ENCODE measurements at regions of chr1 and their contacts with region 1.

Region 1: DNA sequence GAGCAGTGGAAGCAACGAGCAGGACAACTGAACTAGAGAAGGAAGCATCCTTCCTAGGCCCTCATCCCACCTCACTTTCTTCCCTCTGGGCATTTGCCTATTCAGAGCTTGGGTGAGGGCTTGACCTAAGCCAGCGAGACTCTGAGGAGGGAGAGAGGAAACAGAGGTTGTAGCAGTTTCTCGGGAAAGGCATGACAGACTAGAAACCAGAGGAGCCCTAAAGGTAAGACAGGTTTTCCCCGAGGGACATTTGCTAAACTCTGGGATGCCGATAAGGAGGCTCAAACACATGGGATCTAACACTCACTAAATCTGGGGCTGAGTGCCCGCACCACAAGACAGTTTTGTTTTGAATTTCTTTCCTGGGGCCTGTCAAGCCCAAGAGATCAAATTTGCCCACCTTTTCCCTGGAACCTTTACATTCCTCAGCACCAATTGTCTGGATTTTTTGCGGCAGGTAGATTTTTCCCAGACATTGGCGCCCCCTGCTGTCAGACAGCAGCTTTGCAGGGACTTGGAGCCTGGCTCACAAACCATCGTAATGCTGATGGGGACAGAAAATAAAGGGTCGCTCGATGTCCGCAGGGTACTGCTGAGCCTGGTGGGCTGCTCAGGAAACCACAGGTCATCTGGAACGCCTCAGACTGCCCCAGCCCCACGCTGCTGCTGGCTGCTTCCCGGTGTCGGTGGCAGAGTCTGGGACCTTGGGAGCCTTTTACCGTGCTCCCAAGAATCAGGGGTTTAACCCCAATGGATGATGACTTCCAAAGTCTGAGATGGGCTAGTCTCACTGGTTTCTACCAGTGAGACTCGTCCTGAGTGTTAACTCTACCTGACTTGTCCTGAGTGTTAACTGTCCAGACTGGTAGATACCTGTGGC is 23.4 kb upstream of the TSPAN2 start:
- DNase-seq: peak; percentile 42
- H3K4me3 Mint-ChIP-seq: no peak overlapping the region
- H3K27ac Mint-ChIP-seq: no peak overlapping the region
- H3K4me1 Mint-ChIP-seq: peaks cover 6% of the 10 kb centered on the region
- H3K27me3 Mint-ChIP-seq: no peaks in the 10 kb centered on the region
- CTCF ChIP-seq: peak; percentile 90

Region 2: GRCh38 chr1:114979278-114979891 is 133.4 kb before region 1 on chr1:
- CTCF ChIA-PET with region 1: interaction called, 28 read pairs
- POLR2A ChIA-PET with region 1: interaction called, 3 read pairs
- intact Hi-C with region 1: loop called (anchors 1 kb)
- DNase-seq: peak; percentile 71
- H3K4me3 Mint-ChIP-seq: no peak overlapping the region
- H3K27ac Mint-ChIP-seq: no peak overlapping the region
- H3K4me1 Mint-ChIP-seq: no peaks in the 10 kb centered on the region
- H3K27me3 Mint-ChIP-seq: peaks cover 64% of the 10 kb centered on the region
- CTCF ChIP-seq: peak; percentile 66

Region 3: GRCh38 chr1:115021154-115021553 is 91.6 kb before region 1 on chr1:
- CTCF ChIA-PET with region 1: no interaction called
- POLR2A ChIA-PET with region 1: no interaction called
- intact Hi-C with region 1: no loop called
- DNase-seq: no peak
- H3K4me3 Mint-ChIP-seq: no peak overlapping the region
- H3K27ac Mint-ChIP-seq: no peak overlapping the region
- H3K4me1 Mint-ChIP-seq: no peaks in the 10 kb centered on the region
- H3K27me3 Mint-ChIP-seq: peaks cover 61% of the 10 kb centered on the region
- CTCF ChIP-seq: no peak

Region 4: DNA sequence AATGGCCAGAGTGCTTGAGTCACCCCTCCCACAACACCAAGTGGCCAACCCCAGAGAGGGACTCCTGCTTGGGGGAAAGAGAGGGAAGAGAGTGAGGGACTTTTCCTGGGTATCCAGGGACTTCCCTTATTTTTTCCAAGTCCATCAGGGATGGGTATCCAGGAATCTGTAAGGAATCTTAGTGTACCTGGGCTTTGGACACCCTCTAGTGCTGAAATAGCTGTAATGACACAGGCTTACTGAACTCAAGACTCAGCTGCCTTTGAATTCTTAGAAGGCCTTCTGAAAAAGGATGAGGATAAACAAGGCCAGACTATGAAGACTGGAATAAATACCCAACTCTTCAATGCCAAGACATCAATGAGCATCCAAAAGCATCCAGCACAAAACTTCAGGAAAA is 71.1 kb before region 1 on chr1:
- CTCF ChIA-PET with region 1: interaction called, 18 read pairs
- POLR2A ChIA-PET with region 1: no interaction called
- intact Hi-C with region 1: no loop called
- DNase-seq: peak; percentile 51
- H3K4me3 Mint-ChIP-seq: no peak overlapping the region
- H3K27ac Mint-ChIP-seq: no peak overlapping the region
- H3K4me1 Mint-ChIP-seq: no peaks in the 10 kb centered on the region
- H3K27me3 Mint-ChIP-seq: peaks cover 28% of the 10 kb centered on the region
- CTCF ChIP-seq: peak; percentile 39

Region 5: DNA sequence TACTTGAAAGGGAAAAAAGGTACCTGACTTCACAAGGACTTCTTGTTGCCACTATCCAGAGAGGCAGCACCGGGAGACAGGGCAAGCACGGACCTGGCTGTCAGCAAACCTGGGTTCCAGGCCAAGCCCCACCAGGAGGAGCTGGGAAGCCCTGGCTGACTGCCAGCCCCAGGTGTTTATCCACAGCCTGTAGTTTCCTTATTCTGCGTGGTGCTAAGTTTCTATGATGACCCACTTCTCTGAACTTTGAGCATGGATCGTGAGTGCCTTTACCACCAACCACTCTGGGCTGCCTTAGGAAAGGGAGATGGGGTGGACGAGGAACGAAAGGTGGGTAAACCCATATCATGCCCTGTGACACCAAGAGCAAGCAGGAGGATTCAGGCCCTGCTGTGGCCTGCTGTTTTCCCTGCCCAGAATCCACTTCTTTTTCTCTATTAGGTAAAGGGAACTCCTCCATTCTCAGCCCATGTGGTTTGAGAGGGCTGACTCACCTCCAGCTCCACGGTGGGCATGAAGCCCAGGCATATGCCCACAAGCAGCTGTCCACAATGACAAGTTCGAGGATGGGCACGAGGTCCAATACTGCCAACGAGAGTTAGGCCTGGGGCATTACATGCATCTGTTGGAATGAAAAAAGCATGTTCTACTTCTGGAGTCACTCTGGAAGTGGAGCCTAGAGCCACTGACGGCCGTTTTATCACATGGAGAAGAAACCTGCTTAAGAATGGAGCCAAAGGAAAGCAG is 43.7 kb before region 1 on chr1:
- CTCF ChIA-PET with region 1: interaction called, 14 read pairs
- POLR2A ChIA-PET with region 1: no interaction called
- intact Hi-C with region 1: no loop called
- DNase-seq: peak; percentile 80
- H3K4me3 Mint-ChIP-seq: no peak overlapping the region
- H3K27ac Mint-ChIP-seq: peak overlapping the region; percentile 82
- H3K4me1 Mint-ChIP-seq: peaks cover 33% of the 10 kb centered on the region
- H3K27me3 Mint-ChIP-seq: no peaks in the 10 kb centered on the region
- CTCF ChIP-seq: no peak

Region 6: GRCh38 chr1:115078708-115079107 is 34.0 kb before region 1 on chr1:
- CTCF ChIA-PET with region 1: interaction called, 14 read pairs
- POLR2A ChIA-PET with region 1: no interaction called
- intact Hi-C with region 1: no loop called
- DNase-seq: no peak
- H3K4me3 Mint-ChIP-seq: no peak overlapping the region
- H3K27ac Mint-ChIP-seq: no peak overlapping the region
- H3K4me1 Mint-ChIP-seq: peaks cover 9% of the 10 kb centered on the region
- H3K27me3 Mint-ChIP-seq: no peaks in the 10 kb centered on the region
- CTCF ChIP-seq: no peak

Region 7: GRCh38 chr1:115275212-115275611 is 162.5 kb after region 1 on chr1:
- CTCF ChIA-PET with region 1: no interaction called
- POLR2A ChIA-PET with region 1: no interaction called
- intact Hi-C with region 1: no loop called
- DNase-seq: peak; percentile 48
- H3K4me3 Mint-ChIP-seq: no peak overlapping the region
- H3K27ac Mint-ChIP-seq: no peak overlapping the region
- H3K4me1 Mint-ChIP-seq: no peaks in the 10 kb centered on the region
- H3K27me3 Mint-ChIP-seq: no peaks in the 10 kb centered on the region
- CTCF ChIP-seq: peak; percentile 54